OCI-LY7 (cell line): ENCODE measurements at regions of chr15 and their contacts with region 1.

Region 1: GRCh38 chr15:38817427-38818156 is 253.0 kb upstream of the RASGRP1 start:
- DNase-seq: peak; percentile 70
- H3K4me3 ChIP-seq: no peak overlapping the region
- H3K27ac ChIP-seq: no peak overlapping the region
- H3K4me1 ChIP-seq: no peaks in the 10 kb centered on the region
- CTCF ChIP-seq: peak; percentile 99

Region 2: DNA sequence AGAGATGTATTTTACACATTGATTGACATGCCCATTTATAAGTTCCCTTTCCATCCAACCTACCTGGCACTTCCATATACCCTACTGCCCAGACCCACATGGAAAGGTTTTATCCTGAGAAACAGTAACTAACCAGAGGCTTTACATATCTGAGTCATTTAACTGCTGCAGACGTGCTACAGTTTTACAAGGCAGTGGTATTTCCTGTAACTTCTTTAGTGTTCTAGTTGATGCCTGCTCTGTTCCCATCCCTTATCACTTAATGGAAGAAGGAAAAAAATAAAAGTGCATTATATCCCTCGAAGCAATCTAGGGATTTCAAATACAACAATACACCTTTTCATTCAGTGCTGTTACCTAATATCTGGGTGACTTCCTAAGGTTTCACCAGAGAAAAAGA is 776.0 kb before region 1 on chr15:
- CTCF ChIA-PET with region 1: no interaction called
- POLR2A ChIA-PET with region 1: no interaction called
- intact Hi-C with region 1: no loop called
- DNase-seq: no peak
- H3K4me3 ChIP-seq: no peak overlapping the region
- H3K27ac ChIP-seq: no peak overlapping the region
- H3K4me1 ChIP-seq: peaks cover 6% of the 10 kb centered on the region
- CTCF ChIP-seq: no peak

Region 3: DNA sequence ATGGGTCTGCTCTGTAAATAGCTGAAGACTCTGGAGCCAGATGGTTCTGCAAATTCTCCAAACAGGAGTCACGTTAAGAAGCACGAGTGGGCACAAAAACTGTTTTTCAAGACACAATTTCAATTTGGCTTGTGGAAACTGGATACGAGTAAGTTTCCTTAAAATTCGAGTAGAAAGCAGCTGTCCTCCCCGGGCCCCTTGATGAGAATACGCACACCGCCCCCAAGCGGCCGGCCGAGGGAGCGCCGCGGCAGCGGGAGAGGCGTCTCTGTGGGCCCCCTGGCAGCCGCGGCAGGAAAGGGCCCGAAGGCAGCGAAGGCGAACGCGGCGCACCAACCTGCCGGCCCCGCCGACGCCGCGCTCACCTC is 762.5 kb after region 1 on chr15:
- CTCF ChIA-PET with region 1: no interaction called
- POLR2A ChIA-PET with region 1: no interaction called
- intact Hi-C with region 1: loop called (anchors 5 kb)
- DNase-seq: peak; percentile 66
- H3K4me3 ChIP-seq: no peak overlapping the region
- H3K27ac ChIP-seq: no peak overlapping the region
- H3K4me1 ChIP-seq: no peaks in the 10 kb centered on the region
- CTCF ChIP-seq: peak; percentile 92